ENCODE measurements at regions of chr12 and their contacts with region 1.

Region 1: GRCh38 chr12:55940065-55940732 is 9.2 kb downstream of the DGKA start:
- DNase-seq: peak; percentile 92
- ATAC-seq: peak; percentile 94
- H3K4me3 Mint-ChIP-seq: peak overlapping the region; percentile 10; the same call in 1 of the 2 replicates
- H3K27ac Mint-ChIP-seq: no peak overlapping the region
- H3K4me1 Mint-ChIP-seq: peaks cover 9% of the 10 kb centered on the region
- H3K27me3 Mint-ChIP-seq: peaks cover 17% of the 10 kb centered on the region
- CTCF ChIP-seq: peak; percentile 74

Region 2: GRCh38 chr12:55817346-55818139 is 122.7 kb before region 1 on chr12 and contains the starts of genes ORMDL2 and SARNP:
- CTCF ChIA-PET with region 1: interaction called, 23 read pairs
- POLR2A ChIA-PET with region 1: interaction called, 4 read pairs
- DNase-seq: peak; percentile 96
- ATAC-seq: peak; percentile 96
- H3K4me3 Mint-ChIP-seq: no peak within 1 kb of the TSS; the same call in none of the 2 replicates
- H3K27ac Mint-ChIP-seq: no peak within 1 kb of the TSS; the same call in 1 of the 2 replicates
- H3K4me1 Mint-ChIP-seq: peaks cover 39% of the 10 kb centered on the region
- H3K27me3 Mint-ChIP-seq: no peaks in the 10 kb centered on the region
- CTCF ChIP-seq: no peak
- total RNA-seq, gene ORMDL2: 32.9 to 37.9 TPM (median 34.8 TPM) in 3 replicates
- total RNA-seq, gene SARNP: 98.3 to 102 TPM (median 100 TPM) in 3 replicates

Region 3: DNA sequence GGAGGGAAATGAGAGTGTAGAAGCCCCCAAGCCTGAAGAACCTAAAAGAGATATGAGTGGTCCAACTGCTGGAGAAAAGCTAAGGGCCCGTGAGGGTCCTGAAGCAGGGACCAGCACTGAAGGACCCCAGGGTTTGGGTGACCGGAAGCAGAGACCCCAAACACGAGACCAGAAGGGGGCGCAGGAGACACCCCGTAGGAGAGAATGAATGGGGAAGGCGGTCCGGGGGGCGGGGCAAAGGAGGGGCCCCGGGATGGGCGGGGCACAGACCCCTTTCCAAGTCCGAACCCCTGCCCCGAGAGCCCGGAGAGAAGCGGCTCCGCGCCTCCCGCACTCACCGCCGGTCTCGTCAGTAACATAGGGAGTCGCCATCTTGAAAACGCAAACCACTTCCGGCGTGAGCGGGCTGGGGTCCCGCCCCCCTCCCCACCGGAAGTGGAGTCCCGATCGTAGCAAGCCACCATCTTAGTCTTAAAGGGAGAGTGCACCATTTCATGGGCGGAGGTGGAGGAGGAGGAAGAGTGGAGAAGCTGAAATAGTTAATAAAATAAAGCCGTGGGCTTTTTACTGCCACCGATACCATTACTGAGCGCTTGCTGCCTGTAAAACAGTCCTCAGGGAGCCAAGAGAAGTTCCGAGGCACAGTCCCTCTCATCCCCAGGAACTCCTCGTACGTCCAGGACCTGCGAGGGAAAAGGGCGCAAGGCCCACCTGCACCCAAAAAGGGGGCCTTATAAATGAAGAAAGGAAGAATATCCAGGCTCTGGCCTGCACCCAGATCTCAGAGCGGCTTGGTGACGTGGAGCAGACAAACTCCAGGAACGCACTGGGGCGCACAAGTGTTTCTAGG is 13.2 kb before region 1 on chr12:
- CTCF ChIA-PET with region 1: interaction called, 30 read pairs
- POLR2A ChIA-PET with region 1: no interaction called
- DNase-seq: peak; percentile 95
- ATAC-seq: peak; percentile 56
- H3K4me3 Mint-ChIP-seq: peak overlapping the region; percentile 94
- H3K27ac Mint-ChIP-seq: peak overlapping the region; percentile 96
- H3K4me1 Mint-ChIP-seq: peaks cover 42% of the 10 kb centered on the region
- H3K27me3 Mint-ChIP-seq: peaks cover 10% of the 10 kb centered on the region
- CTCF ChIP-seq: peak; percentile 51